ENCODE measurements at regions of chr16 and their contacts with region 1.

Region 1: DNA sequence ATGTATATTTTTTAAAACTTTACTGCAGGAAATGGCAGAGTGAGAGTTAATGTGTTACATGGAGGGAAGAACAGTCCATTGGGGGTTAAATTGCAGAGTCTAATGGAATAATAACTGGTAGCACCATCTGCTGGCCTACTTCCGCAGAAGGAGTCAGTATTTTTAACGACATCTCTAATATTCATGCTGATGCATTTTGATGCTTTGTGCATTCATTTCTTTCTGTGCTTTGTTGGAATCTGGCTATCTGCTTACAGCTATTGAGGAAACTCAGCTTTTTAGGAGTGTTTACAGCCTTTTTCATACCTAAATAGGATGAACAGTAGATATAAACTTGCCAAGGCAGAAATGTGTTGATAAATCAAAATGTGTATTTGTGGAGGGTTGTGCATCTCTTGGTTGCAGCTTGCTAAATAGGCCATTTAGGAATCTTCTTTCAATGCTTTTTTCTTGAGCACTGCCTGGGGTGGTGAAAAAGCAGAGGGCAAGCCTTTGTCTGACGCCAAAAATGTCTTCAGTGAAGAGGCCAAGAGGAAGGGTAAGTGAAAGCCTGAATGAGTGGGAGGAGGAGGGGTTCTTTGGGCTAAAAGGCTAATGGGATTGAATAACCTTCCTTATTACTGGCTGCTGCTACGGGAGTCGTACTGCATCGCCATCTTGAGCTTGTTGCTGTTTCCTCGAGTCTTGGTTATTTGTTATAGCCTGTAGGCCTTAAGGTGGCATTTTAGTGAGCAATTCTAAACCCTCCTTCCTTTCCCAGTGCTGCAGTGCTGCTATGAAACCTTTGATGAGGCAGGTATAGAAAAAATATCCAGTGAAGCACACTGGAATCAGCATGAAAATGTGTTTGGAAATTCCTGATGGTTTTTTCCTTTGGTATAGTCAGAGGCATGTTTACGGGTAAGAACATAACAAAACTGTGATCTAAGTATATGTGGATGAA is 153.3 kb downstream of the CHD9 start:
- DNase-seq: peak in 7 of 10 donors; percentile 24 to 71 (median 53)
- H3K4me3 ChIP-seq: peak overlapping the region; percentile 42 to 81 (median 65)
- H3K27ac ChIP-seq: peak overlapping the region; percentile 67 to 97 (median 91)
- H3K27me3 ChIP-seq: no peaks in the 10 kb centered on the region
- CTCF ChIP-seq: peak in 55 of 56 donors; percentile 31 to 73 (median 58)

Region 2: DNA sequence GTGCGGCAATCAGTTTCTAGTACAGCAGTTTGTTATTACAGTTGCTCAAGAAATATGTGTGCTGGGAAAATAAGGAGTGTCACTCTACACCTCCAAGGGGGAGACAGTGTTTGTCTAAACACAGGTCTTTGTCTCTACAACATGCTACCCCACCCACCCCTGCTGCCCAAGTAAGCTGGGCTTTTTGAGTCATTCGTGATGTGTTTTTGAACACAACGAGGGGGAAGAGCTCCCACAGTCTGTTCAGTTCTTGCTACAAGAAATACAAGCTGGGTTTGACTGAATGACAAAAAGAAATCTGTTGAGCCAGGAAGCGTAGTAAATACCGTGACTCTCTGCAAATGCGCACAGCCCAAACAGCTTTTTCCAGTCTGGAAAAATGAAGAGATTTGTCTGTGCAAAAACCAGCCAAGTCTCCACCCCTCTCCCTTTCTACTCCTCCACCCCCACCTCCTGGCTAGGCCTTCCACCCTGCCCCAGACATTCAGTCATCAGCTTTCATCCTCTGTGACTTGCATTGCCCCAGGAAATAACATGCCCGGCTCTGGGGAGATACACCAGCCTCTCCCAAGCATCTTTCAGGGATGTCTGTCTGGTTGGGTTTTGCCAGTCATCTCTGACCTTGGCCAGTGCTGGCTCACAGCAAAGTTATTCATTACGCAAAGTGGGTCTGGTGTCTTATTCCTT is 127.6 kb before region 1 on chr16:
- intact Hi-C with region 1: loop called in 1 of 2 experiments (anchors 10 kb)
- DNase-seq: peak in 1 of 10 donors; percentile 46
- H3K4me3 ChIP-seq: peak overlapping the region in 10 of 59 donors; percentile 0 to 30 (median 11)
- H3K27ac ChIP-seq: peak overlapping the region in 39 of 59 donors; percentile 1 to 77 (median 28)
- H3K27me3 ChIP-seq: no peaks in the 10 kb centered on the region
- CTCF ChIP-seq: no peak

Measured in dorsolateral prefrontal cortex (tissue), 120 donors.